ENCODE measurements at regions of chr10 and their contacts with region 1.

Region 1: DNA sequence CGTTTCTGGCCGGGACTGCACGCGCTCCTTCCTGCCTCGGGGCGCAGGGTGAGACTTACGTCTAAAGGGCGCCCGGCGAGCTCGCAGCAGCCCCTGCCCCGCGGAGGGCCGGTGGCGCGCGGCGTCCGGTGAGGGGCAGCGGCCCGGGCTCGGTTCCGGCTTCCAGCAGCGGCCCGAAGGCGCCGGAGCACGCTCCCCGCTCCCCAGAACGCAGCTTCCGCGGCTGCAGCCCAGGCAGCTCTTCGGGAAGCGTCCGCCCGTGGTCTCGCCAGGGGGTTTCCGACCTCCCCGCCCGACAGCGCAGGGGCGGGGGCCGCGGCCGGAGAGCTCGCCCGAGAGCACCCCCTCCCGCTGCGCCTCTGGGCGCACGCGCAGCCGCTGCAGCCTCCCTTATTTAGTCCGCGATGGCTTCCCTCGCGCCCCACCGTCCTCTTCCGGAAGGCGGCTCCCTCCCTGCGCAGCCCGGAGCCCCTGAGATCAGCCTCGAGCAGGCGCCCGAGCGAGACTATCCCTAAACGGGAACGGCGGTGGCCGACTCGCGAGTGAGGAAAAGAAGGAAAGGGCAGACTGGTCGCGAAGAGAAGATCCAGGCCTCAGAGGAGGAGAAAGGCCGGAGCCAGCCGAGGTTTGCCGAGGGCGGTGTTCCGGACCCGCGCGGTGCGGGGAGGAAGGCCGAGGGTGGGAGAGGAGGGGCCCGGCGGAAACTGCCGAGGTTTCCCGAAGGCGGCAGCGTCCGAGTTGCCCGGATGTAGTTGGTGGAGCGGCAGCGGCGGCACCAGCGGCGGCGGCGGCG is at the start of gene WAC:
- DNase-seq: peak; percentile 95
- H3K4me3 Mint-ChIP-seq: peak within 1 kb of the TSS; percentile 99
- H3K27ac Mint-ChIP-seq: peak within 1 kb of the TSS; percentile 100
- H3K4me1 Mint-ChIP-seq: peaks cover 42% of the 10 kb centered on the region
- H3K27me3 Mint-ChIP-seq: no peaks in the 10 kb centered on the region
- total RNA-seq, gene WAC: 126 and 130 TPM in 2 replicates

Region 2: DNA sequence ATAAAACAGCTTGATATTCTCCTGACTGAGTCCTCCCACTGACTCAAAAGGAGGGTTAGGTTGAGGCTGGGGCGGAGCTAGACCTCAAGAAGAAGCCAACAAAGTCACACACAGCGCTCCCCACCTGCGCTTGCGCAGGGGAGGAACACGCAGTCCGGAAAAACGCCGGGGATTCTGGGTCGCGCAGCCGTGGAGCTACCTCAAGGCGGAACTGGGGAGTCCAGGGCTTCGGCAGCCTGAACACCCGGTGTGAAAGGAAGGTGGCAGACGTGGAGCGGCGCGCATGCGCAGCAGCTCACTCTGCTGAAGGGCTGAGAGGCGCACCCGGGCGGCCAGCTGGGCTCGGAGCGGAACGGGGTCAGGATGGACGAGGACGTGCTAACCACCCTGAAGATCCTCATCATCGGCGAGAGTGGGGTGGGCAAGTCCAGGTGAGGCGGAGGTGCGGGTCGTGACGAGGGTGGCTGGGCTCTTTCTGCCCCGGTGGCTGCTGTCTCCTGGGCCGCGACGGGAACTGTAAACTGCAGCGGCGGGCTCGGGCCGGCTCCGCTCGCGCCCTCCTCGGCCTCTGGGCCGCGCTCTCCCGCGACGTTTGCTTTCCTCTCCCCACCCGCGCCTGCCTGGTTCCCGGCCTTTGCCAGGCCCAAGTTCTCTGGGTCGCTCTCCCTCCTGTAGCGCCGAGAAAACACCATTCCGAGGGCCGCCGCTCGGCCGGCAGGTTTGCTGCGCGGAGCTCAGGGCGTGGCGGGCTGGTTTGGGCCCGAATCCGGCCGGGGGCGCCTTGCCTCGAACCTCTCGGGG is 1028.4 kb before region 1 on chr10 and contains the start of gene RAB18:
- intact Hi-C with region 1: loop called (anchors 5 kb)
- DNase-seq: peak; percentile 98
- H3K4me3 Mint-ChIP-seq: peak within 1 kb of the TSS; percentile 93
- H3K27ac Mint-ChIP-seq: peak within 1 kb of the TSS; percentile 91
- H3K4me1 Mint-ChIP-seq: peaks cover 46% of the 10 kb centered on the region
- H3K27me3 Mint-ChIP-seq: no peaks in the 10 kb centered on the region
- total RNA-seq, gene RAB18: 55.9 and 56.4 TPM in 2 replicates

Region 3: DNA sequence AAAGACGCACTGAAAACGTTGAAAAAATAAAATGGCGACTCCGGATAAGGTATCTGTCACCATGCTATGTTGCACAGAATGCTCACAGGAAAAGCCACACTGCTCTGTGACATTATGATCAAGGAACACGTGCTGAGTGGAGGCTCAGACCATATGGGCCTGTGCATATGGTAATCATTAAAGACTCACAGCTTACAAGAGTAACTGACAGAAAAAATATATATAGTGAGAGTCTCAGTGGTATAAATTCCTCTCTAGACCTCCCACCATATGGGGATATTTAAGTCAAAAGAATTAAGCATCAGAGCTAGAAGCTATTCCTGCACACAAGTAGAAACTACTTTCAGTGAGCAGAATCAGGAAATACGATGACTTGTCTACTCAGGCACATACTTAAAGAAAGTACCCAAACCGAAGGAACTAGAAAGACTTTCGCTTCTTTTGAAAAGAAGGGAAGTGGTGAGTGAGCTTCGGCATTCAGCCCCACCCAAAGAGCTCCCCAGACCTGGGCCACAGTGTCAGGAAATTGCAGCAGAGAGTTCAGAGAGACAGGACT is 164.6 kb before region 1 on chr10:
- intact Hi-C with region 1: loop called (anchors 2 kb)
- DNase-seq: peak; percentile 60
- H3K4me3 Mint-ChIP-seq: peak overlapping the region; percentile 37
- H3K27ac Mint-ChIP-seq: peak overlapping the region; percentile 83
- H3K4me1 Mint-ChIP-seq: peaks cover 24% of the 10 kb centered on the region
- H3K27me3 Mint-ChIP-seq: no peaks in the 10 kb centered on the region

Region 4: DNA sequence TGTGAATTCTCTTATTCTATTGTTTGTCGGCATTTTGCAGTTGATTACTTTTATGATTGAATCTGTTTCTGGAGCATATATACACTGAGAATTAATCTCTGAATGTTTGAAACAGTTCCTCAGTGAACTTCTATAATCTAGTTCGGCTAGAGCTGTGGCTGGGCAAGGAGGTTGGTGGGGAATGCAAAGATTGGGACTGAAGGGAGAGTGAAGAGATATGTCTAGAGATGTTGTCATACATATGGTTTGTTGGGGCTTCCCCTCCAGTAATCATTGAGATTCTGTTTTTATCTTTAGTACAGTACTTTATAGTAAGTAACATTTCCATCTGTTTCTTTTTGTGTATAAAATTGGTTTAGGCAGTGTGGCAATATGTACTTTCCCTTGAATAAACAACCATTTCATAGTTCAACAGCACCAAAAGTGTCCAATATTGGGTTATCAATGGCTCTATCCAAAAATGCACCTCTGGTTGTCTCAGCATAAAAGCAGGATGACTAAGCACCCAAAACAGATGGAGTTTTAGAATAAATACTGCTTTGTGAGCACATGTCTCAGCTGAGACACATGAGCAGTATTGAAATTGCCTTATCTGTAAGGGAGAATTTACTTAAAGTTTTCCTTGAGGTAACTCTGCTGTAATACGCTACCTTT is 37.1 kb after region 1 on chr10:
- intact Hi-C with region 1: loop called (anchors 5 kb)
- DNase-seq: no peak
- H3K4me3 Mint-ChIP-seq: no peak overlapping the region
- H3K27ac Mint-ChIP-seq: peak overlapping the region; percentile 72
- H3K4me1 Mint-ChIP-seq: peaks cover 51% of the 10 kb centered on the region
- H3K27me3 Mint-ChIP-seq: no peaks in the 10 kb centered on the region

Region 5: GRCh38 chr10:28592930-28593329 is 60.4 kb after region 1 on chr10:
- intact Hi-C with region 1: no loop called
- DNase-seq: no peak
- H3K4me3 Mint-ChIP-seq: no peak overlapping the region
- H3K27ac Mint-ChIP-seq: peak overlapping the region; percentile 70
- H3K4me1 Mint-ChIP-seq: peaks cover 40% of the 10 kb centered on the region
- H3K27me3 Mint-ChIP-seq: no peaks in the 10 kb centered on the region

Region 6: GRCh38 chr10:28624351-28624750 is 91.8 kb after region 1 on chr10:
- intact Hi-C with region 1: no loop called
- DNase-seq: no peak
- H3K4me3 Mint-ChIP-seq: no peak overlapping the region
- H3K27ac Mint-ChIP-seq: no peak overlapping the region
- H3K4me1 Mint-ChIP-seq: peaks cover 5% of the 10 kb centered on the region
- H3K27me3 Mint-ChIP-seq: no peaks in the 10 kb centered on the region

Region 7: GRCh38 chr10:28676968-28677887 is 144.6 kb after region 1 on chr10 and contains the start of gene BAMBI:
- intact Hi-C with region 1: loop called (anchors 5 kb)
- DNase-seq: peak; percentile 88
- H3K4me3 Mint-ChIP-seq: peak within 1 kb of the TSS; percentile 74
- H3K27ac Mint-ChIP-seq: no peak within 1 kb of the TSS
- H3K4me1 Mint-ChIP-seq: peaks cover 26% of the 10 kb centered on the region
- H3K27me3 Mint-ChIP-seq: peaks cover 73% of the 10 kb centered on the region
- total RNA-seq, gene BAMBI: 0.16 TPM in 2 replicates